Heart left ventricle (tissue), 16 donors: ENCODE measurements at regions of chr10 and their contacts with region 1.

Region 1: GRCh38 chr10:114403541-114404161 is 651 bp downstream of the AFAP1L2 start:
- DNase-seq: peak in 4 of 5 donors; percentile 55 to 74 (median 58)
- ATAC-seq: peak; percentile 44 to 71 (median 59)
- H3K4me3 ChIP-seq: peak overlapping the region; percentile 52 to 71 (median 61)
- H3K27ac ChIP-seq: peak overlapping the region; percentile 37 to 76 (median 68)
- H3K4me1 ChIP-seq: peaks cover 4 to 66% (median 27%) of the 10 kb centered on the region in 12 donors
- H3K27me3 ChIP-seq: peaks cover 0 to 39% (median 5%) of the 10 kb centered on the region in 9 donors
- CTCF ChIP-seq: peak in 9 of 12 donors; percentile 11 to 50 (median 31)
- POLR2A ChIP-seq: no peak

Region 2: GRCh38 chr10:114151486-114151885 is 252.2 kb before region 1 on chr10:
- intact Hi-C with region 1: no loop called
- DNase-seq: no peak
- ATAC-seq: no peak
- H3K4me3 ChIP-seq: no peak overlapping the region
- H3K27ac ChIP-seq: no peak overlapping the region
- H3K4me1 ChIP-seq: no peaks in the 10 kb centered on the region
- H3K27me3 ChIP-seq: no peaks in the 10 kb centered on the region
- CTCF ChIP-seq: no peak
- POLR2A ChIP-seq: no peak

Region 3: GRCh38 chr10:114320249-114321116 is 83.2 kb before region 1 on chr10:
- intact Hi-C with region 1: loop called in 1 of 10 experiments (anchors 5 kb)
- DNase-seq: peak in 2 of 5 donors; percentile 49 to 87
- ATAC-seq: peak in 3 of 4 donors; percentile 16 to 76 (median 65)
- H3K4me3 ChIP-seq: no peak overlapping the region
- H3K27ac ChIP-seq: peak overlapping the region in 1 of 12 donors; percentile 62
- H3K4me1 ChIP-seq: peaks cover 0 to 27% (median 2%) of the 10 kb centered on the region in 12 donors
- H3K27me3 ChIP-seq: no peaks in the 10 kb centered on the region
- CTCF ChIP-seq: no peak
- POLR2A ChIP-seq: no peak

Region 4: DNA sequence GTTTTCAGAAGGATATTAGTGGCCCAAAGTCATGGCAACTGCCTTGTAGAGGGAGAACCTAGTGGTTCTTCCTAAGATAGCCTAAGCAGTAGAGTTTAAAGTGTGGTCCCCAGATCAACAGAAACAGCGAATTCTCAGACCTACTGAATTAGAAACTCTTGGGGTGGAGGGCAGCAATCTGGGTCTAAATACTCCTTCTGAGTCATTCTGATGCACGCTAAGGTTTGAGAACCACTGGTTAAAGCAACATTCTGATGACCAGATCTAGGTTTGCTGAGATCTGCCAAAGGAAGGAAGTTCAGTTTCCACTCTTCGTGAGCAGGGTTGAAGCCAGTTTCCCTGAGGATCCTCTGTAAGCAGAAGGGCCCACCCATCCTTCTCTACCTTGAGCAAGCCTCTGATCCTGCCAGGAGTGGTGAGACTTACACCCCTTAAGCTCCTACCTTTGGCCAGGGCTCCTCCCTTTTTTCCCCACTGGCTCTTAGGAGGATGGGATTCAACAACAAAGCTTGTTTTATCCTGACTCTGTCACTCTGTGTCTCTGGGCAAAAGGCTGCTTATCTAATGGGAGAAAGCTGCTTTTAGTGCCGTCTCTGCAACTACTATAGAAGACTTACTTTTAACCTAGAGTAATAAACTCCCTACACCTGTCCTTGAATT is 507.5 kb after region 1 on chr10:
- intact Hi-C with region 1: no loop called
- DNase-seq: no peak
- ATAC-seq: no peak
- H3K4me3 ChIP-seq: no peak overlapping the region
- H3K27ac ChIP-seq: no peak overlapping the region
- H3K4me1 ChIP-seq: no peaks in the 10 kb centered on the region
- H3K27me3 ChIP-seq: no peaks in the 10 kb centered on the region
- CTCF ChIP-seq: no peak
- POLR2A ChIP-seq: no peak